ENCODE measurements at regions of chr1 and their contacts with region 1.

Region 1: DNA sequence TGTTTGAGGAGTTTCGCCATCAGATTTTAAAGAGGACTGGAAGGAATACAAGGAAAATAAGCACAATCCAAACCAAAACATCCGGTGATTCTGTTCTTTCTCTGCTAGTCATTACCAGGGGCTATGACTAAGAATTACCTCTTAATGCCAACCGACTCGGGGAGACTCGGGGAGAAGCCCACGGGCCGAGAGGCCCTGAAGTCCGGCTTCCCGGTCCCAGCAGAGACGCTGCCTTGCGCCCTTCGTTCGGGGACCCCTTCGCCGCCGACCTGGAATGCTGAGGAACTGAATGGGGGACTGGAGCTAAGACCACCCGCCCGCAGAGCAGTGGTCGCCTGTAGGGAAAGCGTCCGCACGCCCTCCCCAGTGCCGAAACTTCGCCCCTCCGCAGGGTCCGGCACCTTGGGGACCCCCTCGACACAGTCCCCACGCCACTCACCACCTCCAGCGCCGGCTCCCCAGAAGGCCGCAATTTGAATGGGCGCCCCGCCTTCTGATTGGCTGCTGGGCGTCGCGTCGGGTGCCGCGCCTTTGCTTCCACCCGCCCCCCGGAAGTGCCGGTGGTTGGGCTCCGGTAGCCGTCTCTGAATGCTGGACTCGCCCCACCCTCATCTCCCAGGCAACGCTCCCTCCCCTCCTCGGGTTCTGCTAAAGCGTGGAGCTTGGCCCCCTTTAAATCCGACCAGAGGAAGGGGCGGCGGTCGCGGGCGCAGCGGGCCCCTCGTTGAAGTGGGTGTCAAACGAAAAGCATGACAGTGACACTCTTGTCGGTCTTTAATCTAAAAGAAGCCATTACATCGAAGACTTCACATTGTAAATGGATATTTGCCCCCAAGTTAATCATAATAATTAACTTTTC is at the start of gene KIF14:
- DNase-seq: peak; percentile 99
- H3K4me3 Mint-ChIP-seq: peak within 1 kb of the TSS; percentile 95
- H3K27ac Mint-ChIP-seq: peak within 1 kb of the TSS; percentile 95
- H3K4me1 Mint-ChIP-seq: peaks cover 47% of the 10 kb centered on the region
- H3K27me3 Mint-ChIP-seq: no peaks in the 10 kb centered on the region
- total RNA-seq, gene KIF14: 11.5 and 11.6 TPM in 2 replicates

Region 2: DNA sequence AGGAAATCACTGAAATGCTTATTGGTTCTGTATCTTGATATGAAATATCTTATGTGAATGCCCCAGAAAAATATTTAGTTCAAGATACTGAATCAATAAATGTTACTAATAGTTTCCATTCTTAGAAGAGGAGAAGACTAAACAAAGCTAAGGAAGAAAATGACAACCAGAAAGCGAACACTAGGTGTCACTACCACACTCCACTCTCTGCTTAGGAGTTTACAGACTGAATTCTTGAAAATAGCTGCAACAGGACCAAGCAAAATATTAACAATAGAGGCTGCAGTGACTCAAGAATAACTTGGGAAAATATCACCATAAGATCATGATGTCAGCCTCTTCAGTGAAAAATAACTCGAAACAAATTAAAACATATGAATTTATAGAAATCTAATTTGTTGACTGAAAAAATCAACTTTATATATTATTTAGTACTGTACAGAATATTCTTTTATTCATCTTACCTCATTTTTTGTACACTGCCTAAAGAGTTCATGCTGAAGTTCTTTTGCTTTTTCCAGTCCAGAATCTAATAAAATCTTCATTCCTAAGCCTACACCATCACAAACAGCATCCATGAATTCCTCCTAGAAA is 61.5 kb before region 1 on chr1:
- intact Hi-C with region 1: loop called (anchors 2 kb)
- DNase-seq: peak; percentile 67
- H3K4me3 Mint-ChIP-seq: no peak overlapping the region
- H3K27ac Mint-ChIP-seq: no peak overlapping the region
- H3K4me1 Mint-ChIP-seq: peaks cover 12% of the 10 kb centered on the region
- H3K27me3 Mint-ChIP-seq: no peaks in the 10 kb centered on the region

Region 3: GRCh38 chr1:200738740-200739498 is 118.4 kb after region 1 on chr1 and contains the start of gene CAMSAP2:
- intact Hi-C with region 1: loop called (anchors 2 kb)
- DNase-seq: peak; percentile 89
- H3K4me3 Mint-ChIP-seq: peak within 1 kb of the TSS; percentile 94
- H3K27ac Mint-ChIP-seq: peak within 1 kb of the TSS; percentile 87
- H3K4me1 Mint-ChIP-seq: peaks cover 21% of the 10 kb centered on the region
- H3K27me3 Mint-ChIP-seq: peaks cover 38% of the 10 kb centered on the region
- total RNA-seq, gene CAMSAP2: 1.4 and 2.5 TPM in 2 replicates

Region 4: DNA sequence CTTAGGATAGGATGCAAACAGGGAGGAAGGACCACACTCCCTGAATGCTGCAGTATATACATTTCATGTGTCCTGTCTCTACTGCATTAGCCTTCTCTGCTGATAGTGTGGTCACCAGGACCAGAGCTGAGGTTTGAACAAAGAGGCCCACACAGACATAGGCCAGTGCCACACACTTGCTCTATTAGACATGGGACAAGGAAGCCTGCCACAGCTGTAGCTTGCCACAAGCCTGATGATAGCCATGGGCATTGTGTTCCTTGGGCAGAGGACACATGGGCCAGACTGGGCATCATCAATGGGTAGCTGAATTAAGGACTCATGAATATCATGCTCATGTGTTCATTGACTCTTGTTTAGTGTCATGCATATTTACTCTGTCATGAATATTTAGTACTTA is 128.6 kb after region 1 on chr1:
- intact Hi-C with region 1: no loop called
- DNase-seq: no peak
- H3K4me3 Mint-ChIP-seq: no peak overlapping the region
- H3K27ac Mint-ChIP-seq: no peak overlapping the region
- H3K4me1 Mint-ChIP-seq: peaks cover 8% of the 10 kb centered on the region
- H3K27me3 Mint-ChIP-seq: peaks cover 10% of the 10 kb centered on the region

Region 5: DNA sequence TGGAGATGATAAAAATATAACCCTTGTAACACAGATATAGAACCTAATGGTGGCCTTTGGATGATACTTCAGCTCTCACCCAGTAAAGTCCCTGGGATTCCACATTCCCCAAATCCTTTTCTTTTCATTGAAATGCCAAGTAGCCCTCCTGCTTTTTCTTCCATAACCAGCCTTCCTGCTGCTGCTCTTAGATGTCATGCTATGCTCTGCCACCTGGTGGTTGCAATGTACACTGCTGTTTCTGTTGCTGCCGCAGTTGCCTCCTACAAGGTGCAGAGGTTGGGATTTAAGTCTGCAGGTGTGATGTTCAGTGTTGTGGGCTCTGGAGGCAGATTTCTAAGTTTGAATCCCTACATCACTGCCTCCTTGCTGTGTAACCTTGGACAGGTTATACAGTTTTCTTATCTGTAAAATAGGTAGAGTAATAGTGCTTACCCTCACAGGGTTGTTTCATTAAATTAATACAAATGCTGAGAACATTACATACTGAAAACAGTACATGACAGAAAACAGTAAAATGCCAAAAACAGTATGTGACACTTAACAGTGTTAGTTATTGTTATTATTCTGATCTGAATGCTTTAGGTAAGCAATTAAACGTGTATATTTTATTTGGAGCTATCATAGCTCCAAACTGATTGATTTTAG is 182.5 kb after region 1 on chr1:
- intact Hi-C with region 1: loop called (anchors 1 kb)
- DNase-seq: peak; percentile 91
- H3K4me3 Mint-ChIP-seq: no peak overlapping the region
- H3K27ac Mint-ChIP-seq: no peak overlapping the region
- H3K4me1 Mint-ChIP-seq: peaks cover 2% of the 10 kb centered on the region
- H3K27me3 Mint-ChIP-seq: peaks cover 20% of the 10 kb centered on the region

Region 6: GRCh38 chr1:201023517-201023902 is 403.0 kb after region 1 on chr1 and contains the start of gene KIF21B:
- intact Hi-C with region 1: loop called (anchors 5 kb)
- DNase-seq: peak; percentile 98
- H3K4me3 Mint-ChIP-seq: peak within 1 kb of the TSS; percentile 90
- H3K27ac Mint-ChIP-seq: peak within 1 kb of the TSS; percentile 97
- H3K4me1 Mint-ChIP-seq: peaks cover 70% of the 10 kb centered on the region
- H3K27me3 Mint-ChIP-seq: no peaks in the 10 kb centered on the region
- total RNA-seq, gene KIF21B: 48.3 and 49.3 TPM in 2 replicates